ENCODE measurements at regions of chr10 and their contacts with region 1.

Region 1: DNA sequence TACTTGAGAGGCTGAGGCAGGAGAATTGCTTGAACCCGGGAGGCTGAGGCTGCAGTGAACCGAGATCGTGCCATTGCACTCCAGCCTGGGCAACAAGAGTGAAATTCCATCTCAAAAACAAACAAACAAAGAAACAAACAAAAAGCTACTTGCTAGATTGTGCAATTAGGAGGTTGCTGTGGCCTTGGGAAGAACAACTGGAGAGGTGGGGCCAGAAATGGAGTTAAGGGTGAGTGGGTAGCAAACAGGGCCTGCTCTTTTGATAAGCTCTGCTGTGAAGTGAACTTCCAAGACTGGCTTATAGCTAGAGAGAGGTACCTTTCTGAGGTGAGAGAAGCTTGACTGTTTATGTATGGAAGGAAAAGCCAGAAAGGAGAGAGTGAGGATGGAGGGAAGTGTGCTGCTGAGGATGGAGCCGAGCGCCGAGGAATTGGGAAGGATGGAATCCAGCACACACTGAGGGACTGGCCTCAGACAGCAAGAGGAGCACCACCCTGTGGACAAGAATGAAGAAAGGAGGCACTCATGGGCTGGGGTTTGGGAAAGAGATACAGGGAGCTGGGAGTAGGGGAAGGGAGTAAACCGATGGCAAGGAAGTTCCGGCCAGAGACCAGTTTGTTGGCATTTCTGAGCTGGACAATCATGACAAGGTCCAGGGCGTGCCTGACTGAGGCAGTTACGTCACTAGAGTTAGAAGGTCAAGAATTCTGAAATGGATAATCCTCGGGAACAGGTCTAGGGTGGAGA is 7.0 kb upstream of the RPEL1 start:
- DNase-seq: no peak
- H3K4me3 ChIP-seq: no peak overlapping the region
- CTCF ChIP-seq: peak; percentile 68

Region 2: GRCh38 chr10:103102195-103102594 is 136.5 kb before region 1 on chr10:
- CTCF ChIA-PET with region 1: interaction called, 62 read pairs
- POLR2A ChIA-PET with region 1: no interaction called
- DNase-seq: no peak
- H3K4me3 ChIP-seq: no peak overlapping the region
- CTCF ChIP-seq: no peak

Region 3: DNA sequence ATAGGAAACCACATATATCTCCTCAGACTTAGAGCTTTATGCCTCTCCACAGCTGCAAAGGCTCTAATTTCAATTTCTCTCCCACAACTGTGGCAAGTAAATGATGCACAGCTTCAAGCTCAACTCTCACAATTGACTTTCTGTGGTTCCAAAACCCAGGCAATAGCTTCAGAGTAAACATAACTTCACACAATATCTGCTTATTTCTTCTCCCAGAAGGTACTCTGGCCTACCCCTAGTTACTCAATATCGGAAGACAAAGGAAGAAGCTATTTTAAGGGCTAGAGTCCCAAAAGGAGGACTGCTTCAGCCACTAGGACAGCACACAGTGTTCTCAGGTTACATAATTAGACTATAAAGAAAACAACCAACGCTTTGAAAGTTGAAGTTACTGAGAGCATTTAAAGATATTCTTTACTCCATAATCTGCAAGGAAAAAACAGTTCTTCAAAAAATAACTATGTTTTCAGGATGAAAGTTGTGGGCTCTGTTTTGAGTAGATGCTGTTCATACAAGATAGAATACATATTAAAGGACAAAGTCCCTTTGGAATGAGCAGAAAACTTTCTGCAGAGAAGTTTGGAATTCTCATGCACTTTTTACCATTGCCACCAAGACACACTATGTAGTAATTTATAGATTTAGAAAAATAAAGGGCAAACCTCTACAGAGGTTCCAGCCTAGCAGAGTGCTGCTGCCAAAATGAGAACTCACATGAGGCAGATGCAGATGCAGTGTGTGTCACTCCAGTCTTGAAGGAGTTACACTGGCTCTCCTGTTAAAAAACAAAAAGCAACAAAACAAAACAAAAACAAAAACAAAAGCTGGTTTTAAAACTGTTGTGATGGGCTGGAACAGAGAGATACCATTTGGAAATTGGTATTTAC is 127.4 kb before region 1 on chr10:
- CTCF ChIA-PET with region 1: interaction called, 62 read pairs
- POLR2A ChIA-PET with region 1: no interaction called
- DNase-seq: no peak
- H3K4me3 ChIP-seq: no peak overlapping the region
- CTCF ChIP-seq: no peak

Region 4: GRCh38 chr10:103153302-103154197 is 85.1 kb before region 1 on chr10:
- CTCF ChIA-PET with region 1: interaction called, 19 read pairs
- POLR2A ChIA-PET with region 1: no interaction called
- DNase-seq: no peak
- H3K4me3 ChIP-seq: no peak overlapping the region
- CTCF ChIP-seq: no peak

Region 5: DNA sequence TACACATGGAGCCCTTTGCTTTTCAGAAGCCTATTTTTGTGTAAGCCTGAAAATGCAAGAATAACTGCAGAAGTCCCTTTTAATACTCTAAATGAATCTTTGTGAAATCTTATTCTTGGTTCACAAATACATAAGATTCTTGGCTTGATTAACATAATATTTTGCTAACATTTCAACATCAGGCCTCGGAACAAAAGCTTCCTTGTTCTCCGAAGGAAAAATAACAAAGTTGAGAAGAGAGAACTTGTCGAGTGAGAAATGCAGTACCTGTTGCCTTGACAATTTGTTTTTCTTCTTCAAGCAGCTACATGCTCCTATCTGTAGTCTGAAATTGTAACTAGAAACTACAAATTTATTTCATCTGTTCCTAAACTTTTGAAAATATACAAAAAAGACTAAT is 54.1 kb before region 1 on chr10:
- CTCF ChIA-PET with region 1: interaction called, 10 read pairs
- POLR2A ChIA-PET with region 1: no interaction called
- DNase-seq: no peak
- H3K4me3 ChIP-seq: no peak overlapping the region
- CTCF ChIP-seq: no peak

Region 6: DNA sequence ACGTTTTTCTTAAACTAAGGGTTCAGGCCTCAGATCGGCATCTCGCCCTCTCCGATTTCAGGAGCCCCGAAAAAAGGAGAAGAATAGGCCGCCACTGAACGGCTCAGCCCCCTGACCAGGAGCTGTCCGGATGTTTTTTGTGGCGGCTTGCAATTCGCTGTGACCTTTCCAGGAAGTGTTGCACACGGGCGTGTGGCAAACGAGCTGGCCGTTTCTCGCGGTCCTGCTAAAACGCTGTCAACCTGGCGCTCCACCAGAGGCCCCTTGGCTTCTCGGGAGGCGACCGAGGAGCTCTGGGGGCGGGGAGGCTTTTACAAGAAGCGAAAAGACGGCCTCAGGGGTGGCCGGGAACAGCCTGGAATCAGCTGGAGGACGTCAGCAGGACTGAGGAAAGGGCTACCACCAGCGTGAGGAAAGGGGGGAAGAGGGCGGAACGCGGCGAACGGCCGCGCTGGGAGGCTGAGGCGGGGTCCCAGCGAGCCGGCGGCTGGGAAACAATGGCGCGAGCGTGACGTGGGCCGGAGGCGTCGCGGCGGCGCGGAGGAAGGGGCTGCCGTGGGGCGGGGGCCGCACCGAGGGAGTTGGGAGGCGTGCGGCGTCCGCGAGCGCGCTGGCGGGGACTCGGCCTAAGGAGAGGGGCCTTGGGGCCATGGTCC is 46.1 kb before region 1 on chr10:
- CTCF ChIA-PET with region 1: interaction called, 36 read pairs
- POLR2A ChIA-PET with region 1: interaction called, 4 read pairs
- DNase-seq: no peak
- H3K4me3 ChIP-seq: peak overlapping the region; percentile 77
- CTCF ChIP-seq: no peak

Measured in AG04449 (cell line).